Activated CD4-positive, alpha-beta T cell treated with anti-CD3 and anti-CD28 coated beads for 36 hours (primary cell): ENCODE measurements at regions of chr20 and their contacts with region 1.

Region 1: GRCh38 chr20:54207743-54208547 is at the start of gene PFDN4:
- DNase-seq: peak; percentile 88
- ATAC-seq: peak; percentile 82
- H3K4me3 Mint-ChIP-seq: peak within 1 kb of the TSS; percentile 80
- H3K27ac Mint-ChIP-seq: peak within 1 kb of the TSS; percentile 99
- H3K4me1 Mint-ChIP-seq: peaks cover 47% of the 10 kb centered on the region
- H3K27me3 Mint-ChIP-seq: no peaks in the 10 kb centered on the region
- total RNA-seq, gene PFDN4: 55.4 to 60.5 TPM

Region 2: GRCh38 chr20:53157443-53158408 is 1050.2 kb before region 1 on chr20:
- CTCF ChIA-PET with region 1: no interaction called
- POLR2A ChIA-PET with region 1: no interaction called
- intact Hi-C with region 1: loop called in 1 of 2 experiments (anchors 10 kb)
- DNase-seq: peak; percentile 60
- ATAC-seq: no peak
- H3K4me3 Mint-ChIP-seq: no peak overlapping the region
- H3K27ac Mint-ChIP-seq: peak overlapping the region; percentile 44
- H3K4me1 Mint-ChIP-seq: peaks cover 53% of the 10 kb centered on the region
- H3K27me3 Mint-ChIP-seq: peaks cover under 1% of the 10 kb centered on the region

Region 3: DNA sequence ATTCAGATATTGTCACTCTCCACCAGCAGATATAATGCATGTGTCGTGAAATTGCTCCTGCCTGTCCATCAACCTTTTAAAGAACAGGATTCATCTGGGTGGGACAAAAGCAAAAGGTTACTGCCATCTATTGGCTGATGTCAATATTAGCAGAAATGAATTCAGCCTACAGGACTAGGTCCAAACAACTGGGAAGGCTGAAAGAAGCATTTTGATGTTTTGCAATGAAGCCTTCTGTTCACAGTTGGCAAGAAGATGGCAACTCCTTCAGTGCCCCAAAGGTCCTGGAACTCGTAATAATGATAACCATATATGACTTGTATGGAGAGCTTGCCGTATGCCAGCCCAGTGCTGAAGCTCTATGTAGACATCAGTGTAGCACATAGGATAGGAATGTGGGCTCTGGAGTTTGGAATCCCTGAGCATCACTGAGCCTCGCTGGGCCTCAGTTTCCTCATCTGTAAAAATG is 145.1 kb before region 1 on chr20:
- CTCF ChIA-PET with region 1: no interaction called
- POLR2A ChIA-PET with region 1: no interaction called
- intact Hi-C with region 1: no loop called
- DNase-seq: no peak
- ATAC-seq: peak; percentile 54
- H3K4me3 Mint-ChIP-seq: no peak overlapping the region
- H3K27ac Mint-ChIP-seq: no peak overlapping the region
- H3K4me1 Mint-ChIP-seq: peaks cover 15% of the 10 kb centered on the region
- H3K27me3 Mint-ChIP-seq: no peaks in the 10 kb centered on the region

Region 4: DNA sequence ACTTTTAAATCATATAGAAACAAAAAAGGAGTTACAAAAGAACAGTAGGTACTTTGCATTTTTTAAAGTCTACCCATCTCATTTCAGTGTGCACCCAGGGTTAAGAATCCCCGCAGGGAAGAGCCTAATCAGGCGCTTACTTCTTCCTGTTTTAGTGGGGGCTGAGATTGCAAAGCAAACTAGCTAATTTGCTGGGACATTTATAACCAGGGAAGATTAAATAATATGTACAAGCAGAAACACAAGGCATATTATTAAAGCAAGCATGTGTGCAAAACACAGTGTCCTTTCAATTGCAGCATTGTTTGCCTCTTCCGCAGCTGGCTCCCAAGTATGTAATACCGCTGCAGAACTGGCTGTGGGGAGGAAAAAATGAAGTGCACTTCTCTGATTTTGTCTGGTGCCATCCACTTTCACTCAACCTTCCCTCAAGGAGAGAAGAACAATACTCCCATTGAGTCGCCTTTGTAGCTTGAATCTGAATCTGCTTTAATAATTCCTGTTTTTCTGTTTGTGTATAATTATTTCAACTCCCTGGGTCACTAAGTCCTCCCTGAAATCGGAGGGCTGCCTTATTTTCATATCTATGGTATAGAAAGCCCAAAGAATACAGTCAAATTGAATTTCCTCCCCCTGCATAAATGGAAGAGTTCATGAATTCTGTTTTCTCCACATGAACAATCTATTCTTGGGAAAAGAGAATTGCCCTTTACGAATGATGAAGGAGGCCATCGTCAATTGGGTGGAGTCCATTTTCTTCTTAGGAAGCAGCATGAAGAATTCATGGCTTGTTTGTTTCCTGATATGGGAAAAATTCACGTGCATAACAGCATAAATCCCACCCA is 114.3 kb before region 1 on chr20:
- CTCF ChIA-PET with region 1: interaction called, 10 read pairs
- POLR2A ChIA-PET with region 1: no interaction called
- intact Hi-C with region 1: no loop called
- DNase-seq: no peak
- ATAC-seq: no peak
- H3K4me3 Mint-ChIP-seq: no peak overlapping the region
- H3K27ac Mint-ChIP-seq: no peak overlapping the region
- H3K4me1 Mint-ChIP-seq: no peaks in the 10 kb centered on the region
- H3K27me3 Mint-ChIP-seq: no peaks in the 10 kb centered on the region

Region 5: GRCh38 chr20:54219751-54220426 is 11.9 kb after region 1 on chr20:
- CTCF ChIA-PET with region 1: interaction called, 12 read pairs
- POLR2A ChIA-PET with region 1: no interaction called
- intact Hi-C with region 1: no loop called
- DNase-seq: no peak
- ATAC-seq: no peak
- H3K4me3 Mint-ChIP-seq: no peak overlapping the region
- H3K27ac Mint-ChIP-seq: no peak overlapping the region
- H3K4me1 Mint-ChIP-seq: peaks cover 28% of the 10 kb centered on the region
- H3K27me3 Mint-ChIP-seq: no peaks in the 10 kb centered on the region

Region 6: GRCh38 chr20:54649511-54649962 is 441.6 kb after region 1 on chr20:
- CTCF ChIA-PET with region 1: interaction called, 4 read pairs
- POLR2A ChIA-PET with region 1: no interaction called
- intact Hi-C with region 1: loop called in 1 of 2 experiments (anchors 5 kb)
- DNase-seq: peak; percentile 84
- ATAC-seq: peak; percentile 53
- H3K4me3 Mint-ChIP-seq: no peak overlapping the region
- H3K27ac Mint-ChIP-seq: no peak overlapping the region
- H3K4me1 Mint-ChIP-seq: no peaks in the 10 kb centered on the region
- H3K27me3 Mint-ChIP-seq: peaks cover 10% of the 10 kb centered on the region